BJ (cell line): ENCODE measurements at regions of chr2 and their contacts with region 1.

Region 1: DNA sequence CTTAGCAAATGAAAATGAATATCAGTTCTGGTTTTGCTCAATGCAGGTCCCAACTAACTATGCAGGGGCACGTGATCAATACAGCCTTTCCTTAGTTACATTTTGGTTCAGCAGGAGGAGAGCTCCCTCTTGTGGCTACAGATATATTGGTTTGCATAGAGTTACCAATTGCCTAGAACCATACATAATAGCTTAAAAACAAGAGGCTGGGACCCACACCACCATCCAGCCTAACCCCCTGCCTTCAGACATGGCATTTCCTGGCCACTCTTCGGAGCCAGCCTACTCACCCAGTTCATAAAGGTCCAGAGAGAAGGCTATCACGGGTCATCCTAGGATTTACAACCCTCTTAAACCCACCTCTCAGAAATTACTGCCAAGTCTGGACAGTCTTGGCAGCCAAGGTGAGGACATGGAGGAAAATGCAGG is 10.5 kb downstream of the CCDC93 start:
- DNase-seq: peak; percentile 32
- H3K4me3 ChIP-seq: no peak overlapping the region
- H3K27me3 ChIP-seq: no peaks in the 10 kb centered on the region
- CTCF ChIP-seq: peak; percentile 78

Region 2: DNA sequence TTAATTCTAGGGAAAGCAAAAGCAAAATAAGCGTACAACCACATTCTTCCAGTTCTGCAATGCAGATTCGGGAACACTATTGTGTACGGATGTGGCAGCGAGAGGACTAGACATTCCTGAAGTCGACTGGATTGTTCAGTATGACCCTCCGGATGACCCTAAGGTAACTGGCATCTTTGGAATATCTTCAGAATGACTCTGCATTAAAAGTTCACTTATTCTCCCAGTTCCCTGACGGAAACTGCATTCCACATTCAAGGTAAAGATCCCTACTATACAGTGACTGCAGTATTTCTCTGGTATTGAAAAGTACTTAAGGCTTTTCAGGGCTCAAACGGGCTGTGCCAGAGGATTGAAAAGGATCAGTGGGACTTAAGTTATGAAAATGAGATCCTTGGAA is 178.0 kb before region 1 on chr2:
- CTCF ChIA-PET with region 1: interaction called, 12 read pairs
- POLR2A ChIA-PET with region 1: no interaction called
- DNase-seq: no peak
- H3K4me3 ChIP-seq: no peak overlapping the region
- H3K27me3 ChIP-seq: no peaks in the 10 kb centered on the region
- CTCF ChIP-seq: no peak

Region 3: DNA sequence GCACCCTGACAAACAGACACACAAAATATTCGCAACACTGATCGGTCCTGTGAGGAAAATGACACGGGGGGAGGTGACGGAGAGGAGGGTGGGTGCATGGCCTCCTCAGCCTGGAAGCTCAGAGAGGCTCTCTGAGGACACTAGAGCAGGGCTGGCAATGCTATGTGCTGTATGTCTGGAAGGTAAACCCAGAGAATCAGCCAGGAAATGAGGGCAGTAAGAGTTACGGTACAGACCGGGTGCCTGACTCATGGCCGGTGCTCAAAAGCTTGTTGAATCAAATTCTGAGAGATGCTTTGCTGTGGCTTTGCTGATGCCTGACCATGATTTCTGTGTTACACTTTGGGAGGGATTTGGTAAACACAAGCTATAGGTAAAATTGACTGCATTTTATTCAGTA is 71.4 kb before region 1 on chr2:
- CTCF ChIA-PET with region 1: interaction called, 10 read pairs
- POLR2A ChIA-PET with region 1: no interaction called
- DNase-seq: no peak
- H3K4me3 ChIP-seq: no peak overlapping the region
- H3K27me3 ChIP-seq: no peaks in the 10 kb centered on the region
- CTCF ChIP-seq: no peak

Region 4: DNA sequence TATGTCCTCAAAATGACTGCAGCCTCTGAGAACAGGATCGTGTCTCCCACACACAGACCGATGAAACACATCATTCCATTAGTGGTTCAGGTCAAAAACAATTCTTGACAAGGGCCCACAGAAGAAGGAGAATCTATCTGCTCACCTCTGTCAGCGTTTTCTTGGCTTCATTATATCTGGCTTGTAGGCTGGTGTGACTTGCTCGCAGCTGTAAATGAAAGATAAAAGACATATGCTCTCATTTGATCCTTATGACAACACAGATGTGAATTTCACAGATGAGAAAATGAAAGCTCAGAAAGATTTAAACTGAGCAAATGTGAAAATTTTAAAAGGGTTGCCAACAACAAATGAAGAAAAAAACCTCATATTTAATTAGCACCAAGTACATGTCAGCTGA is 51.2 kb before region 1 on chr2:
- CTCF ChIA-PET with region 1: interaction called, 10 read pairs
- POLR2A ChIA-PET with region 1: no interaction called
- DNase-seq: no peak
- H3K4me3 ChIP-seq: no peak overlapping the region
- H3K27me3 ChIP-seq: no peaks in the 10 kb centered on the region
- CTCF ChIP-seq: no peak

Region 5: DNA sequence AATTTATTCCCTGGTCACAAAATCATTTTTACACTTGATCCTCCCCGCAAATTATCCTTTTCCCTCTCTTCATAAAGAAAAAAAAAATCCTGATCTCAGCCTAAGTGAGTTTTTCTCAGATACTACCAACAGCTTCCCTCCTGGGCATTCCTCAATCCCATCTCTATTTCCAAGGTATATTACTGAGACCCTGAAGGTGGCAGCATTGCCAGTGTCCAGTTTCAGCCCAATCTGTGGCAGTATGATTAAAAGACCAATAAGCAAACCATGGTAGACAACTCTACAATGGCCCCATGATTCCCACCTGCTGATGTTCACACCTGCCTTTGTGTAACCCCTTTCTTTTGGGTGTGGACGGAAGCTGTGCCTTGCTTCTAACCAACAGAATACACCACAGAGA is 34.7 kb before region 1 on chr2:
- CTCF ChIA-PET with region 1: interaction called, 11 read pairs
- POLR2A ChIA-PET with region 1: no interaction called
- DNase-seq: no peak
- H3K4me3 ChIP-seq: no peak overlapping the region
- H3K27me3 ChIP-seq: no peaks in the 10 kb centered on the region
- CTCF ChIP-seq: 0 out of 2 replicates have a peak, but pooled peaks have one; percentile 7

Region 6: GRCh38 chr2:118013724-118014491 is 10.5 kb after region 1 on chr2 and contains the start of gene CCDC93:
- CTCF ChIA-PET with region 1: interaction called, 16 read pairs
- POLR2A ChIA-PET with region 1: no interaction called
- DNase-seq: peak; percentile 31
- H3K4me3 ChIP-seq: peak within 1 kb of the TSS; percentile 61
- H3K27me3 ChIP-seq: no peaks in the 10 kb centered on the region
- CTCF ChIP-seq: no peak
- polyA plus RNA-seq, gene CCDC93: 12.8 and 17.3 TPM in 2 replicates